ENCODE measurements at regions of chr11 and their contacts with region 1.

Region 1: GRCh38 chr11:123859731-123860130 is 25.7 kb downstream of the TMEM225 start:
- DNase-seq: no peak
- ATAC-seq: no peak
- H3K4me3 ChIP-seq: no peak overlapping the region
- H3K4me3 Mint-ChIP-seq: no peak overlapping the region
- H3K27ac ChIP-seq: no peak overlapping the region
- H3K27ac Mint-ChIP-seq: no peak overlapping the region
- H3K4me1 ChIP-seq: no peaks in the 10 kb centered on the region
- H3K4me1 Mint-ChIP-seq: no peaks in the 10 kb centered on the region
- H3K27me3 ChIP-seq: no peaks in the 10 kb centered on the region
- H3K27me3 Mint-ChIP-seq: no peaks in the 10 kb centered on the region
- CTCF ChIP-seq: no peak

Region 2: GRCh38 chr11:123841174-123841573 is 18.6 kb before region 1 on chr11:
- CTCF ChIA-PET with region 1: no interaction called
- POLR2A ChIA-PET with region 1: no interaction called
- intact Hi-C with region 1: loop called in 1 of 2 experiments (anchors 1 kb)
- DNase-seq: no peak
- ATAC-seq: no peak
- H3K4me3 ChIP-seq: no peak overlapping the region
- H3K4me3 Mint-ChIP-seq: no peak overlapping the region
- H3K27ac ChIP-seq: no peak overlapping the region
- H3K27ac Mint-ChIP-seq: no peak overlapping the region
- H3K4me1 ChIP-seq: no peaks in the 10 kb centered on the region
- H3K4me1 Mint-ChIP-seq: no peaks in the 10 kb centered on the region
- H3K27me3 ChIP-seq: no peaks in the 10 kb centered on the region
- H3K27me3 Mint-ChIP-seq: peaks cover 15% of the 10 kb centered on the region
- CTCF ChIP-seq: no peak

Region 3: GRCh38 chr11:124026498-124026897 is 166.8 kb after region 1 on chr11 and contains the start of gene OR10G8:
- CTCF ChIA-PET with region 1: no interaction called
- POLR2A ChIA-PET with region 1: no interaction called
- intact Hi-C with region 1: no loop called
- DNase-seq: no peak
- ATAC-seq: no peak
- H3K4me3 ChIP-seq: no peak within 1 kb of the TSS
- H3K4me3 Mint-ChIP-seq: no peak within 1 kb of the TSS
- H3K27ac ChIP-seq: no peak within 1 kb of the TSS
- H3K27ac Mint-ChIP-seq: no peak within 1 kb of the TSS
- H3K4me1 ChIP-seq: no peaks in the 10 kb centered on the region
- H3K4me1 Mint-ChIP-seq: no peaks in the 10 kb centered on the region
- H3K27me3 ChIP-seq: no peaks in the 10 kb centered on the region
- H3K27me3 Mint-ChIP-seq: no peaks in the 10 kb centered on the region
- CTCF ChIP-seq: no peak
- total RNA-seq, gene OR10G8: not detected